ENCODE measurements at regions of chr12 and their contacts with region 1.

Region 1: GRCh38 chr12:104323899-104324298 is 20.4 kb downstream of the EID3 start:
- DNase-seq: no peak
- ATAC-seq: peak; percentile 14; the same call in 1 of the 2 replicates
- H3K4me3 ChIP-seq: no peak overlapping the region
- H3K27ac ChIP-seq: no peak overlapping the region
- H3K4me1 ChIP-seq: no peaks in the 10 kb centered on the region
- H3K27me3 ChIP-seq: no peaks in the 10 kb centered on the region
- CTCF ChIP-seq: no peak

Region 2: DNA sequence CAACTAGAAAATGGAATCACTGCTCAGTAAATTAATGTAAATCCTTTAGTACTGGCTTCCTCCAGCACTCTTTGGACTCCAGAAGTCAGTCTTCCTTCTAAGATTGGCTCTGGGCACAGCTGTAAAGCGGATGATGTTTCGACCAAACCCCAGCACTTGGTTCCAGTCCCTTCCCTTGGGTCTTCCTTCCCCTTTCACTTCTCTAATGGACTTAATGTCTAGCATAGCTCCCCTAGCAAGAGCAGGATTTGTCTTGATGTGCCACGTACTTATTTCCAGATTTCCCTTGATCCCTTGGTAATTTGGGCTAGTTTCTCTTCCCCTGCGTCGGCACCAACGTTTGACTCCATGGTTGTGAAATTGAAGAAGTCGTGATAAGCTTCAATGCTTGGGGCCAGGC is 1034.9 kb after region 1 on chr12:
- CTCF ChIA-PET with region 1: no interaction called
- POLR2A ChIA-PET with region 1: interaction called, 21 read pairs
- intact Hi-C with region 1: no loop called
- DNase-seq: no peak
- ATAC-seq: no peak
- H3K4me3 ChIP-seq: no peak overlapping the region
- H3K27ac ChIP-seq: no peak overlapping the region
- H3K4me1 ChIP-seq: peaks cover 14% of the 10 kb centered on the region
- H3K27me3 ChIP-seq: no peaks in the 10 kb centered on the region
- CTCF ChIP-seq: no peak

Measured in PC-3 (cell line).